ENCODE measurements at regions of chr19 and their contacts with region 1.

Region 1: GRCh38 chr19:30649934-30650614 is 277.9 kb downstream of the ZNF536 start:
- DNase-seq: no peak
- ATAC-seq: peak in 1 of 2 donors; percentile 33

Region 2: GRCh38 chr19:29858000-29858596 is 792.0 kb before region 1 on chr19:
- intact Hi-C with region 1: loop called in 1 of 2 experiments (anchors 10 kb)
- DNase-seq: no peak
- ATAC-seq: peak in 1 of 2 donors; percentile 31

Region 3: GRCh38 chr19:30227661-30228428 is 422.2 kb before region 1 on chr19:
- intact Hi-C with region 1: loop called (anchors 5 to 10 kb)
- DNase-seq: peak; percentile 65
- ATAC-seq: peak; percentile 80 to 82

Measured in left cardiac atrium (tissue), 4 donors.